Activated CD4-positive, alpha-beta T cell treated with anti-CD3 and anti-CD28 coated beads for 36 hours (primary cell): ENCODE measurements at regions of chr7 and their contacts with region 1.

Region 1: DNA sequence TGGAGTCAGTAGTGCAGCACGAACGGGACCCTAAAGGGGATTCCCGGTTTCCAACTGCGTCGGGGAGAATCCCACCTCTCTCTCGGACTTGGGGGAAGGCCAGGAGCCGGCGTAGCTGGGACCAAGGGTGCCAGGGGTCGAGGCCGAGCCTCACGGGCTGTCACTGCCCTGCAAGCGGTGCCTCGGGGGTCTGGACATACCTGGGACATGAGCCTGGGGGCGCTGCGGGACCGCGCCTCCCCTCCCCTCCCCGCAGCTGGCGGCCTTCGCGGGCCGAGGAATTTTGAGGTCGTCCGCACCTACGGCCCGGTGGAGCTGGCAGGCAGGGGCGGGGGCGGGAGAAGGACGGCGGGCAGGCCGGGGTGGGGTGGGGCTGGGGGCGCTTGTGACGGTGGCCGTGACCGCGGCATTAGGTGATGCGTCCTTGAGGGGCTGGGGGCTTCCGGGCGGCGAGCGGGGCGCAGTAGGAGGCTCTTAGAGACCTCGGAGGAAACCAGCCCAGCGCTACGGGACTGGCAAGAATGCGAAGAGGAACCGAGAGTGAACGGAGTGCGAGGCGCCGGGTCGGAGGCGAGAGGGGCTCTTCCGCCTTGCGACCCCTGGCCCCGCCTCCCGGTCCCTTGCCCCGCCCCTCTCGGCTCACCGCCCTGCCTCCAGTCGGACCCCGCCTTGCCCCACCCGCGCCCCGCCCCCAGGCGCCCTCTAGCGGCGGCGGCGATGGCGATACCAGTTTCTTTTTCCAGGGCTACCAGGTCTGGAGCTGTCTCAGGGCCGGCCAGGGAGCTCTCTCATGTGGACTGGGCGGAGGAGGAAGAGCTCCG is 48.3 kb downstream of the NPVF start:
- DNase-seq: peak; percentile 97
- ATAC-seq: peak; percentile 95
- H3K4me3 Mint-ChIP-seq: peak overlapping the region; percentile 78
- H3K27ac Mint-ChIP-seq: peak overlapping the region; percentile 90
- H3K4me1 Mint-ChIP-seq: peaks cover 16% of the 10 kb centered on the region
- H3K27me3 Mint-ChIP-seq: no peaks in the 10 kb centered on the region

Region 2: GRCh38 chr7:24572997-24573625 is 606.9 kb before region 1 on chr7 and contains the start of gene PALS2:
- CTCF ChIA-PET with region 1: no interaction called
- POLR2A ChIA-PET with region 1: no interaction called
- intact Hi-C with region 1: loop called in 1 of 2 experiments (anchors 5 kb)
- DNase-seq: peak; percentile 86
- ATAC-seq: peak; percentile 68
- H3K4me3 Mint-ChIP-seq: peak within 1 kb of the TSS; percentile 88
- H3K27ac Mint-ChIP-seq: peak within 1 kb of the TSS; percentile 86
- H3K4me1 Mint-ChIP-seq: peaks cover 34% of the 10 kb centered on the region
- H3K27me3 Mint-ChIP-seq: peaks cover 12% of the 10 kb centered on the region
- total RNA-seq, gene PALS2: 20.8 to 41.7 TPM

Region 3: GRCh38 chr7:25125137-25125946 is 54.6 kb before region 1 on chr7 and contains the start of gene CYCS:
- CTCF ChIA-PET with region 1: interaction called, 5 read pairs
- POLR2A ChIA-PET with region 1: no interaction called
- intact Hi-C with region 1: loop called (anchors 1 kb)
- DNase-seq: peak; percentile 100
- ATAC-seq: peak; percentile 97
- H3K4me3 Mint-ChIP-seq: peak within 1 kb of the TSS; percentile 97
- H3K27ac Mint-ChIP-seq: peak within 1 kb of the TSS; percentile 98
- H3K4me1 Mint-ChIP-seq: peaks cover 27% of the 10 kb centered on the region
- H3K27me3 Mint-ChIP-seq: no peaks in the 10 kb centered on the region
- total RNA-seq, gene CYCS: 222 to 237 TPM

Region 4: GRCh38 chr7:25158966-25159365 is 21.0 kb before region 1 on chr7:
- CTCF ChIA-PET with region 1: interaction called, 12 read pairs
- POLR2A ChIA-PET with region 1: no interaction called
- intact Hi-C with region 1: no loop called
- DNase-seq: no peak
- ATAC-seq: no peak
- H3K4me3 Mint-ChIP-seq: no peak overlapping the region
- H3K27ac Mint-ChIP-seq: no peak overlapping the region
- H3K4me1 Mint-ChIP-seq: peaks cover 2% of the 10 kb centered on the region
- H3K27me3 Mint-ChIP-seq: no peaks in the 10 kb centered on the region

Region 5: DNA sequence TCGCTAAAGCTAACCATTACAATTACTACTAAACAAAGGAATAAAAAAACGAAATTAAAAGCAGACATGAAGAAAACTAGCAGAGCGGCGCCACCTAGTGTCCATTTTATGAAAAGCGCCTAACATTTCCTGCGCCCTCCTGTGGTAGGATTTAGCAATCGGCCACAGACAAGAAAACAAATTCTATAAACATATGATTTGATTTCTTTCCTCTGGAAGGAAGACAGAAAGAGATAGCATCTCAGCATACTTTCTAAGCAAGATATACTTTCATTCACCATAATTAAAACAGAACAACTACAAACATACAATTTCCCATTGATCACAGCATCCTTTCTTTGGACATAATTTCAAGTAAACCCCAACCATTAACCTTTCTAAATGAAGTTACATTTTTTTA is 386.0 kb after region 1 on chr7:
- CTCF ChIA-PET with region 1: no interaction called
- POLR2A ChIA-PET with region 1: no interaction called
- intact Hi-C with region 1: loop called in 1 of 2 experiments (anchors 5 kb)
- DNase-seq: peak; percentile 77
- ATAC-seq: no peak
- H3K4me3 Mint-ChIP-seq: no peak overlapping the region
- H3K27ac Mint-ChIP-seq: no peak overlapping the region
- H3K4me1 Mint-ChIP-seq: no peaks in the 10 kb centered on the region
- H3K27me3 Mint-ChIP-seq: no peaks in the 10 kb centered on the region

Region 6: GRCh38 chr7:25857376-25857921 is 677.5 kb after region 1 on chr7:
- CTCF ChIA-PET with region 1: no interaction called
- POLR2A ChIA-PET with region 1: no interaction called
- intact Hi-C with region 1: loop called in 1 of 2 experiments (anchors 2 kb)
- DNase-seq: no peak
- ATAC-seq: no peak
- H3K4me3 Mint-ChIP-seq: no peak overlapping the region
- H3K27ac Mint-ChIP-seq: no peak overlapping the region
- H3K4me1 Mint-ChIP-seq: peaks cover 30% of the 10 kb centered on the region
- H3K27me3 Mint-ChIP-seq: peaks cover 39% of the 10 kb centered on the region